CD4-positive, alpha-beta memory T cell (primary cell): ENCODE measurements at regions of chr3 and their contacts with region 1.

Region 1: DNA sequence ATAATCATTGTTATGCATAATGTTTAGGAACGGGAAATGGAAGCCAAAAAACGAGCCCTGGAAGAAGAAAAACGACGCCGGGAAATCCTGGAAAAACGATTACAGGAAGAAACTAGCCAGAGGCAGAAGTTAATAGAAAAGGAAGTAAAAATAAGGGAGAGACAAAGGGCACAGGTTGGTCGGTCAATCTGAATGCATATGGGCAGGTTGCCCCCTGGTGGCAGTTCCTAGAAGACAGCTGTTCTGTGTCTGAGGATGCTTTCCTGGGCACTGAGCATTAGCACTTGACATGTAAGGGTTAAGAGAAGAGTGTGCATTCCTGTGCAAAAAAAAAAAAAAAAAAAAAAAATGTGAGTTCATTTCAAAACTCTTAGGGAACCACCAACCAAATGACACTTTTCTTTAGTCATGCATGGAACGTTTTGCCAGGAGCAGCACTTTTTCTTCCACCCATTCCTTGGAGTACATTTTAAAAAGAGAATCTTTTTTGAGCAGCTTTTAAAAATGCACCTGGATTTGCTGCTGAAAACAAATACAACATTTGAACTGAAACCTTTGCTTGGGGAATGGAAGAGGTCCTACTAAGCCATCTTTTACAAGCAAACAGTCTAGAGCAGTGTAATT is 11.1 kb upstream of the ABHD10 start:
- DNase-seq: peak; percentile 69 to 77 (median 69)
- H3K4me3 ChIP-seq: no peak overlapping the region
- H3K4me3 Mint-ChIP-seq: peak overlapping the region in 1 of 8 donors; percentile 11
- H3K27ac ChIP-seq: no peak overlapping the region
- H3K27ac Mint-ChIP-seq: peak overlapping the region in 2 of 7 donors; percentile 43 to 44
- H3K4me1 ChIP-seq: no peaks in the 10 kb centered on the region
- H3K4me1 Mint-ChIP-seq: peaks cover 2 to 6% (median 4%) of the 10 kb centered on the region in 4 donors
- H3K27me3 ChIP-seq: no peaks in the 10 kb centered on the region
- H3K27me3 Mint-ChIP-seq: no peaks in the 10 kb centered on the region

Region 2: GRCh38 chr3:111691293-111691909 is 276.4 kb before region 1 on chr3:
- CTCF ChIA-PET with region 1: interaction called, 10 read pairs
- POLR2A ChIA-PET with region 1: no interaction called
- intact Hi-C with region 1: no loop called
- DNase-seq: peak in 2 of 5 donors; percentile 27 to 30
- H3K4me3 ChIP-seq: no peak overlapping the region
- H3K4me3 Mint-ChIP-seq: no peak overlapping the region
- H3K27ac ChIP-seq: no peak overlapping the region
- H3K27ac Mint-ChIP-seq: peak overlapping the region in 2 of 7 donors; percentile 23 to 45
- H3K4me1 ChIP-seq: peaks cover 19% of the 10 kb centered on the region
- H3K4me1 Mint-ChIP-seq: peaks cover 32 to 51% (median 39%) of the 10 kb centered on the region in 4 donors
- H3K27me3 ChIP-seq: no peaks in the 10 kb centered on the region
- H3K27me3 Mint-ChIP-seq: no peaks in the 10 kb centered on the region

Region 3: GRCh38 chr3:111859974-111860859 is 107.5 kb before region 1 on chr3:
- CTCF ChIA-PET with region 1: interaction called, 23 read pairs
- POLR2A ChIA-PET with region 1: interaction called, 4 read pairs
- intact Hi-C with region 1: loop called (anchors 5 kb)
- DNase-seq: peak; percentile 62 to 78 (median 71)
- H3K4me3 ChIP-seq: peak overlapping the region; percentile 59 to 84
- H3K4me3 Mint-ChIP-seq: peak overlapping the region; percentile 91 to 98 (median 97)
- H3K27ac ChIP-seq: peak overlapping the region; percentile 63
- H3K27ac Mint-ChIP-seq: peak overlapping the region; percentile 89 to 97 (median 95)
- H3K4me1 ChIP-seq: peaks cover 11% of the 10 kb centered on the region
- H3K4me1 Mint-ChIP-seq: peaks cover 15 to 47% (median 26%) of the 10 kb centered on the region in 4 donors
- H3K27me3 ChIP-seq: no peaks in the 10 kb centered on the region
- H3K27me3 Mint-ChIP-seq: peaks cover 0 to 1% of the 10 kb centered on the region in 2 donors

Region 4: DNA sequence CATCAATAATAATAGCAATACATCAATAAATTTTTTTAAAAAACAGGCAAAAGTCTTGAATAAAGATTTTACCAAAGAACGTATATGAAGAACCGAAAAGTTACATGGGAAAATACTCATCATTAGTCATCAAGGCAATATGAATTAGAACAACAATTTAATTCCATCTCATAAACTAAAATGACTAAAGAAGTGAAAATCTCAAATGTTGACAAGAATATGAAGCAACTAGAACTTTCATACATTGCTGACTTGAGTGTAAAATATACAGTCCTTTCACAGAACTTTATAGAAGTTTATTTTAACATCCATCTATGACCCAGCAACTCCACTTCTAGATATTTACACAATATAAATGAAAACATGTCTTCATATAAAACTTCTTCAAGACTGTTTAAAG is 24.2 kb before region 1 on chr3:
- CTCF ChIA-PET with region 1: no interaction called
- POLR2A ChIA-PET with region 1: no interaction called
- intact Hi-C with region 1: no loop called
- DNase-seq: no peak
- H3K4me3 ChIP-seq: no peak overlapping the region
- H3K4me3 Mint-ChIP-seq: no peak overlapping the region
- H3K27ac ChIP-seq: no peak overlapping the region
- H3K27ac Mint-ChIP-seq: no peak overlapping the region
- H3K4me1 ChIP-seq: no peaks in the 10 kb centered on the region
- H3K4me1 Mint-ChIP-seq: no peaks in the 10 kb centered on the region
- H3K27me3 ChIP-seq: no peaks in the 10 kb centered on the region
- H3K27me3 Mint-ChIP-seq: no peaks in the 10 kb centered on the region

Region 5: GRCh38 chr3:111956995-111957734 is 10.6 kb before region 1 on chr3:
- CTCF ChIA-PET with region 1: interaction called, 50 read pairs
- POLR2A ChIA-PET with region 1: no interaction called
- intact Hi-C with region 1: no loop called
- DNase-seq: no peak
- H3K4me3 ChIP-seq: no peak overlapping the region
- H3K4me3 Mint-ChIP-seq: no peak overlapping the region
- H3K27ac ChIP-seq: no peak overlapping the region
- H3K27ac Mint-ChIP-seq: peak overlapping the region in 1 of 7 donors; percentile 14
- H3K4me1 ChIP-seq: no peaks in the 10 kb centered on the region
- H3K4me1 Mint-ChIP-seq: no peaks in the 10 kb centered on the region
- H3K27me3 ChIP-seq: no peaks in the 10 kb centered on the region
- H3K27me3 Mint-ChIP-seq: no peaks in the 10 kb centered on the region

Region 6: GRCh38 chr3:112013058-112013783 is 45.5 kb after region 1 on chr3:
- CTCF ChIA-PET with region 1: interaction called, 30 read pairs
- POLR2A ChIA-PET with region 1: no interaction called
- intact Hi-C with region 1: no loop called
- DNase-seq: peak; percentile 46 to 54 (median 51)
- H3K4me3 ChIP-seq: peak overlapping the region in 1 of 2 donors; percentile 19
- H3K4me3 Mint-ChIP-seq: peak overlapping the region in 5 of 8 donors; percentile 3 to 51 (median 33)
- H3K27ac ChIP-seq: no peak overlapping the region
- H3K27ac Mint-ChIP-seq: peak overlapping the region in 3 of 7 donors; percentile 4 to 57 (median 56)
- H3K4me1 ChIP-seq: peaks cover 4% of the 10 kb centered on the region
- H3K4me1 Mint-ChIP-seq: peaks cover 5 to 12% (median 8%) of the 10 kb centered on the region in 4 donors
- H3K27me3 ChIP-seq: no peaks in the 10 kb centered on the region
- H3K27me3 Mint-ChIP-seq: no peaks in the 10 kb centered on the region